ENCODE measurements at regions of chr9 and their contacts with region 1.

Region 1: GRCh38 chr9:122464633-122465567 is 12.8 kb downstream of the OR1J1 start:
- DNase-seq: peak; percentile 76
- H3K4me3 ChIP-seq: peak overlapping the region; percentile 16 to 58 (median 26)
- H3K27ac ChIP-seq: peak overlapping the region in 3 of 4 donors; percentile 10 to 63 (median 49)
- H3K4me1 ChIP-seq: peaks cover 5 to 13% (median 7%) of the 10 kb centered on the region in 4 donors
- H3K27me3 ChIP-seq: no peaks in the 10 kb centered on the region
- CTCF ChIP-seq: peak; percentile 79 to 93 (median 81)
- EP300 ChIP-seq: no peak
- POLR2A ChIP-seq: no peak

Region 2: DNA sequence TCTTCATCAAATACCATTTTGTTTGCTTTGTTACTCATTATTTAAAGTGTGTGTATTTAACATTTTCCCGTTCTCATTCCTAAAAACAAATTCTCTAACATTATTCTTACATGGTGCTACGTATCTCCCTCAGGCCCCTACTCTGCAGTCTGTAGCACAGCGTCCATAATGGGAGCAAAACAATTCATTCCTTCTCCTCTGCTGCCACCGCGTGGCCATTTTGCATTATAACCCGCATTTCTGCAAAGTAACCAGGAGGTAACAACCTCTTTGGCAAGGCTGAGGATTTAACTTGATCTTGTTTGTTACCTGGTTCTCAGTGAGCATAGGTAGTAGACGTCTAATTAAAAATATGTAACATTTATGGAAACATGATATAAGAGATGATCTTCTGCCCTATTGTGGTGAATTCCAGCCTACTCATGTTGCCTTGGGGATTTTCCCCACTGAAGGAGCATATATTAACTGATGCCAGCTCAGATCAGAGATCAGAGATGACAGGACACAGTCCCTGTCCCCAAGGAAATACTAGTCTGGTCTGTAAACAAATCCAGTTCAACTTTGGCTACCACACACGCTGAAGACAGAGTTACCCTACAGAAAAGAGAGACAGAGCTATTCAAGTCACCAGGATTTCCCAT is 345.5 kb after region 1 on chr9:
- in situ Hi-C with region 1: loop called (anchors 5 to 10 kb)
- intact Hi-C with region 1: loop called (anchors 5 kb)
- DNase-seq: peak; percentile 80
- H3K4me3 ChIP-seq: no peak overlapping the region
- H3K27ac ChIP-seq: no peak overlapping the region
- H3K4me1 ChIP-seq: peaks cover 0 to 7% (median 0%) of the 10 kb centered on the region in 4 donors
- H3K27me3 ChIP-seq: no peaks in the 10 kb centered on the region
- CTCF ChIP-seq: peak; percentile 72 to 83 (median 74)
- EP300 ChIP-seq: no peak
- POLR2A ChIP-seq: no peak

Region 3: DNA sequence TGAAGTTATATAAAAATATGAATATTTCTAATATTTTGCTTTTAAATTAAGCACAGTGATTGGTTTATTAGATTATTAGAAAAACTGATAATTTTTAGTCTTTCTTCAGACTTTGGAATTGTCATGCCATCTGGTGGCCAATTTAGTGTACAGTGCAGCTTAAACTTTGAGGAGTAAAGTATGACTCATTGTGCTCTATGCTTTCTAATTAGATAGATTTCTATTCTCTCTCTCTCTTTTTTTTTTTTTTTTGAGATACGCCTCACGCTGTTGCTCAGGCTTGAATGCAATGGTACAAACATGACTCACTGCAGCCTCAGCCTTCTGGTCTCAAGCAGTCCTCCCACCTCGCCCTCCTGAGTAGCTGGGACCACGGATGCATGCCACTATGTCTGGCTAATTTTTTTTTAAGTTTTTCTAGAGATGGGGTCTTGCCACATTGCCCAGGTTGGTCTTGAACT is 526.5 kb after region 1 on chr9:
- in situ Hi-C with region 1: loop called in 1 of 4 experiments (anchors 25 kb)
- intact Hi-C with region 1: no loop called
- DNase-seq: no peak
- H3K4me3 ChIP-seq: no peak overlapping the region
- H3K27ac ChIP-seq: peak overlapping the region in 2 of 4 donors; percentile 10 to 19
- H3K4me1 ChIP-seq: peaks cover 0 to 7% (median 0%) of the 10 kb centered on the region in 4 donors
- H3K27me3 ChIP-seq: no peaks in the 10 kb centered on the region
- CTCF ChIP-seq: peak; percentile 69 to 78 (median 73)
- EP300 ChIP-seq: no peak
- POLR2A ChIP-seq: no peak